Posterior cingulate gyrus (tissue), 11 donors: ENCODE measurements at regions of chr12 and their contacts with region 1.

Region 1: GRCh38 chr12:56315622-56316473 is at the start of gene CNPY2:
- DNase-seq: peak; percentile 81 to 99 (median 93)

Region 2: GRCh38 chr12:56461235-56462159 is 145.6 kb after region 1 on chr12:
- intact Hi-C with region 1: loop called (anchors 5 kb)
- DNase-seq: peak in 2 of 10 donors; percentile 16 to 25